Activated CD8-positive, alpha-beta T cell treated with anti-CD3 and anti-CD28 coated beads, Interleukin-2, amount 10 ng/mL, durations not matched to agents 7 days and 5 days (primary cell): ENCODE measurements at regions of chr5 and their contacts with region 1.

Region 1: GRCh38 chr5:141564216-141564692 is 54.5 kb downstream of the DIAPH1 start:
- DNase-seq: peak; percentile 82
- ATAC-seq: peak; percentile 85
- H3K4me3 Mint-ChIP-seq: no peak overlapping the region
- H3K27ac Mint-ChIP-seq: peak overlapping the region; percentile 80
- H3K4me1 Mint-ChIP-seq: peaks cover 18% of the 10 kb centered on the region
- H3K27me3 Mint-ChIP-seq: no peaks in the 10 kb centered on the region

Region 2: GRCh38 chr5:141320225-141321169 is 243.8 kb before region 1 on chr5 and contains the start of gene TAF7:
- CTCF ChIA-PET with region 1: interaction called, 27 read pairs
- POLR2A ChIA-PET with region 1: no interaction called
- DNase-seq: peak; percentile 95
- ATAC-seq: peak; percentile 94
- H3K4me3 Mint-ChIP-seq: peak within 1 kb of the TSS; percentile 99
- H3K27ac Mint-ChIP-seq: peak within 1 kb of the TSS; percentile 100
- H3K4me1 Mint-ChIP-seq: peaks cover 33% of the 10 kb centered on the region
- H3K27me3 Mint-ChIP-seq: peaks cover 2% of the 10 kb centered on the region
- total RNA-seq, gene TAF7: 65.5 to 67.0 TPM

Region 3: DNA sequence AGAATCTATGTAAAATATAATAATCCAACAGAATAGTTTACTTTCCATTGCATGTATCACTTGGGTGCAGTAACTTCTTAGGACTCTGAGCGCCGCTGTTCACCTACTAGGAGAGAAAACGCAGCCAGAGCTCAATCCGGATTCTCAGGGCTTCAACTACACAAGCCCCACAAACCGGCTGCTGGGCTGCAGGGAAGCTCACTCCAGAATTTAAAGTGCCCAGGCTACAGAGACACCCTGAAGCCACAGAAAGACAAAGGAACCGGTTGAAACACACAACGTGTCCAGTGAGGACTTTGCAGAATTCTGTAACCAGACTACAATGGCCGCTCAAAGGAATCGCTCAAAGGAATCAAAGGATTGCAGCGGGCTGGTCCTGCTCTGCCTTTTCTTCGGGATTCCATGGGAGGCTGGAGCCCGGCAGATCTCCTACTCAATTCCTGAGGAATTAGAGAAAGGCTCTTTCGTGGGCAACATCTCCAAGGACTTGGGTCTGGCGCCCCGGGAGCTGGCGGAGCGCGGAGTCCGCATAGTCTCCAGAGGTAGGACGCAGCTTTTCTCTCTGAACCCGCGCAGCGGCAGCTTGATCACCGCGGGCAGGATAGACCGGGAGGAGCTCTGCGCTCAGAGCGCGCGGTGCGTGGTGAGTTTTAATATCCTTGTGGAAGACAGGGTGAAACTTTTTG is 151.3 kb before region 1 on chr5 and contains the start of gene PCDHGA10:
- CTCF ChIA-PET with region 1: interaction called, 30 read pairs
- POLR2A ChIA-PET with region 1: no interaction called
- DNase-seq: peak; percentile 71
- ATAC-seq: peak; percentile 75
- H3K4me3 Mint-ChIP-seq: peak within 1 kb of the TSS; percentile 71
- H3K27ac Mint-ChIP-seq: no peak within 1 kb of the TSS
- H3K4me1 Mint-ChIP-seq: peaks cover 26% of the 10 kb centered on the region
- H3K27me3 Mint-ChIP-seq: peaks cover 60% of the 10 kb centered on the region
- total RNA-seq, gene PCDHGA10: not detected

Region 4: GRCh38 chr5:141439411-141440141 is 124.7 kb before region 1 on chr5:
- CTCF ChIA-PET with region 1: no interaction called
- POLR2A ChIA-PET with region 1: no interaction called
- DNase-seq: no peak
- ATAC-seq: no peak
- H3K4me3 Mint-ChIP-seq: no peak overlapping the region
- H3K27ac Mint-ChIP-seq: no peak overlapping the region
- H3K4me1 Mint-ChIP-seq: no peaks in the 10 kb centered on the region
- H3K27me3 Mint-ChIP-seq: no peaks in the 10 kb centered on the region

Region 5: GRCh38 chr5:141512390-141512910 is 51.8 kb before region 1 on chr5:
- CTCF ChIA-PET with region 1: interaction called, 22 read pairs
- POLR2A ChIA-PET with region 1: no interaction called
- DNase-seq: peak; percentile 87
- ATAC-seq: peak; percentile 58
- H3K4me3 Mint-ChIP-seq: peak overlapping the region; percentile 43
- H3K27ac Mint-ChIP-seq: peak overlapping the region; percentile 51
- H3K4me1 Mint-ChIP-seq: peaks cover 39% of the 10 kb centered on the region
- H3K27me3 Mint-ChIP-seq: no peaks in the 10 kb centered on the region

Region 6: GRCh38 chr5:141547488-141547887 is 16.8 kb before region 1 on chr5:
- CTCF ChIA-PET with region 1: interaction called, 23 read pairs
- POLR2A ChIA-PET with region 1: no interaction called
- DNase-seq: no peak
- ATAC-seq: no peak
- H3K4me3 Mint-ChIP-seq: no peak overlapping the region
- H3K27ac Mint-ChIP-seq: no peak overlapping the region
- H3K4me1 Mint-ChIP-seq: peaks cover 5% of the 10 kb centered on the region
- H3K27me3 Mint-ChIP-seq: no peaks in the 10 kb centered on the region

Region 7: DNA sequence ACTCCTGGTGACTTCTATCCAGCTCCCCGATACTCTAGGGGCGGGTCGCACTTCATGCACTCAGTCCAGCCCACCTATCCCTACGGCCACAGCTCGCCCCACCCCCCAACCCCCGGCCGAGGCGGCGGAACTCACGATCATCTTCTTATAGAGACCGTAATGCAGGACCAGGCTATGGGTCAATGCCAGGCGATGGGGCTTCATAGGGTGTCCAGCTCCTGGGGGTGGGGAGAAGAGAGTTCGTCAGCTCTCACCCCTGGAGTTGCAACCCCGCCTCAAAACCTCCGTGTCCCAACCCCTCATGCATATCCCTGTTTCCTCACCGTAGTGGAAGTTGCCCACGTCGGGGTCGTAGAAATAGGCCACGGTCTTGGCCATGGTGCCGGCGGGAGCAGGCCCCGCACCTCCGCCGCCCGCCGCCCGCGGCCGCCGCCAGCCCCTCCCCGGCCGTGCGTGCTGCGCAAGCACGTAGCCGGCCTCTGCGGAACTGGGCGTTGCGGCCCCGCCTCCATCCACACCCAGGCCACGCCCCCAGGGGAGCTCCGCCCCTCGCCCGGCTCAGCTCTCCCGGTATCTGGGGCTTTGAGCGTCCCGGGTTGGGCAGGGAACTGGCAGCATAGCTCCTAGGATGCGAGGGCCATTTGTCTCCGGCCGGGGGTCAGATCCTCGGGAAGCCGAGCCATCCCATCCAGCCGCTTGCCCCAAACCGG is 72.3 kb after region 1 on chr5 and contains the starts of genes HDAC3 and RELL2:
- CTCF ChIA-PET with region 1: interaction called, 24 read pairs
- POLR2A ChIA-PET with region 1: no interaction called
- DNase-seq: peak; percentile 94
- ATAC-seq: peak; percentile 79
- H3K4me3 Mint-ChIP-seq: peak within 1 kb of the TSS; percentile 93
- H3K27ac Mint-ChIP-seq: peak within 1 kb of the TSS; percentile 90
- H3K4me1 Mint-ChIP-seq: peaks cover 56% of the 10 kb centered on the region
- H3K27me3 Mint-ChIP-seq: no peaks in the 10 kb centered on the region
- total RNA-seq, gene HDAC3: 88.1 to 91.8 TPM
- total RNA-seq, gene RELL2: 36.9 to 37.1 TPM

Region 8: GRCh38 chr5:141934099-141934844 is 370.0 kb after region 1 on chr5:
- CTCF ChIA-PET with region 1: no interaction called
- POLR2A ChIA-PET with region 1: no interaction called
- DNase-seq: no peak
- ATAC-seq: no peak
- H3K4me3 Mint-ChIP-seq: no peak overlapping the region
- H3K27ac Mint-ChIP-seq: no peak overlapping the region
- H3K4me1 Mint-ChIP-seq: peaks cover 3% of the 10 kb centered on the region
- H3K27me3 Mint-ChIP-seq: no peaks in the 10 kb centered on the region